Cardiac septum (tissue), 1 donor: ENCODE measurements at regions of chr13 and their contacts with region 1.

Region 1: GRCh38 chr13:77026818-77027585 is at the start of gene FBXL3:
- DNase-seq: peak; percentile 93
- total RNA-seq, gene FBXL3: 35.1 TPM

Region 2: GRCh38 chr13:76991796-76992547 is 35.0 kb before region 1 on chr13 and contains the start of gene CLN5:
- intact Hi-C with region 1: loop called (anchors 1 kb)
- DNase-seq: peak; percentile 96
- total RNA-seq, gene CLN5: 13.4 TPM

Region 3: GRCh38 chr13:77222000-77222690 is 195.1 kb after region 1 on chr13:
- intact Hi-C with region 1: no loop called
- DNase-seq: no peak

Region 4: GRCh38 chr13:77329133-77329910 is 302.3 kb after region 1 on chr13:
- intact Hi-C with region 1: loop called (anchors 2 kb)
- DNase-seq: peak; percentile 93